ENCODE measurements at regions of chr4 and their contacts with region 1.

Region 1: DNA sequence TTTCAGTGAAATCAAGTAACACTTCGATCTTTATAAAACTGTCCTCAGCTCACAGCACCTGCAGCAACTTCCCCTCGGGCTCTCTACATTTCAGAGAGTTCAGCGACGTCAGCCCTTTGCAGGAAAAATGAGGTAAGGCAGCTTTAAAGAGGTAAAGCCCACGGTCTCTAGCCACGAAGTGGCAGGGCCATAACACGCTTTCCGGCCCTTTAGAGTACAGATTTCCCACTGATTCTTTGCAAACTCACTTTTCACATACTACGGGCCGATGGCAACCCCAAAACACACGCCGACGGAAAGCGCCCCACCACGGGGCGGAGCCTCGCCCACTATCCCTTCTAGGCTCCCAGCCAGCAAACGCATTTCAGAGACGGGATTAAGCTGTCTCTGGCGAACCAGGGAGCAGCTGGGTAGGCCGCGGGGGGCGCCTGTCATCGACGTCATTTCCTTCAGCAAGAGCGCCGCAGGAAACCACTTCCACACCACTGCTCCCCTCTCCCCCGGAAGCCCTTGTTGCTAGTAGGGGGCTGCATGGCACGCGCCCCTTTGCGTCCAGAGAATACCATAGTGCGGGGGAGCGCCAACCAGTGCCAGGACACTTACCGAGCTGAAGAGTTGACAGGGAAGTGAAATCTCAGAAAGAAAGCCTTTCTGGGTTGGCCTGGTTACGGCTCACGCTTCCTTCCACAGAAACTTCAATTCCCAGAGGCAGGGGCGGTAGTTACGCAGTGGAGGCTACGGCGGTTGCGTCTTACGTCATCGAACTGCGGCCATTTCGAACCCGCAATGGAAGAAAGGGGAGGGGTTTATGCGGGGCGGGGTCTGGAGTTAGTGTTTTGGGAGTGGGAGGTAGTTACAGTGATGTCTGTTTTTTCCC is at the start of gene TRMT10A:
- DNase-seq: peak; percentile 97 to 98 (median 98)
- H3K4me3 ChIP-seq: peak within 1 kb of the TSS; percentile 74 to 95
- H3K4me3 Mint-ChIP-seq: peak within 1 kb of the TSS; percentile 95 to 99 (median 98)
- H3K27ac ChIP-seq: peak within 1 kb of the TSS; percentile 93
- H3K27ac Mint-ChIP-seq: peak within 1 kb of the TSS; percentile 99 to 100 (median 100)
- H3K4me1 ChIP-seq: peaks cover 10% of the 10 kb centered on the region
- H3K4me1 Mint-ChIP-seq: peaks cover 13 to 24% (median 19%) of the 10 kb centered on the region in 4 donors
- H3K27me3 ChIP-seq: no peaks in the 10 kb centered on the region
- H3K27me3 Mint-ChIP-seq: peaks cover 7 to 14% of the 10 kb centered on the region in 2 donors
- total RNA-seq, gene TRMT10A: 5.4 to 5.7 TPM

Region 2: DNA sequence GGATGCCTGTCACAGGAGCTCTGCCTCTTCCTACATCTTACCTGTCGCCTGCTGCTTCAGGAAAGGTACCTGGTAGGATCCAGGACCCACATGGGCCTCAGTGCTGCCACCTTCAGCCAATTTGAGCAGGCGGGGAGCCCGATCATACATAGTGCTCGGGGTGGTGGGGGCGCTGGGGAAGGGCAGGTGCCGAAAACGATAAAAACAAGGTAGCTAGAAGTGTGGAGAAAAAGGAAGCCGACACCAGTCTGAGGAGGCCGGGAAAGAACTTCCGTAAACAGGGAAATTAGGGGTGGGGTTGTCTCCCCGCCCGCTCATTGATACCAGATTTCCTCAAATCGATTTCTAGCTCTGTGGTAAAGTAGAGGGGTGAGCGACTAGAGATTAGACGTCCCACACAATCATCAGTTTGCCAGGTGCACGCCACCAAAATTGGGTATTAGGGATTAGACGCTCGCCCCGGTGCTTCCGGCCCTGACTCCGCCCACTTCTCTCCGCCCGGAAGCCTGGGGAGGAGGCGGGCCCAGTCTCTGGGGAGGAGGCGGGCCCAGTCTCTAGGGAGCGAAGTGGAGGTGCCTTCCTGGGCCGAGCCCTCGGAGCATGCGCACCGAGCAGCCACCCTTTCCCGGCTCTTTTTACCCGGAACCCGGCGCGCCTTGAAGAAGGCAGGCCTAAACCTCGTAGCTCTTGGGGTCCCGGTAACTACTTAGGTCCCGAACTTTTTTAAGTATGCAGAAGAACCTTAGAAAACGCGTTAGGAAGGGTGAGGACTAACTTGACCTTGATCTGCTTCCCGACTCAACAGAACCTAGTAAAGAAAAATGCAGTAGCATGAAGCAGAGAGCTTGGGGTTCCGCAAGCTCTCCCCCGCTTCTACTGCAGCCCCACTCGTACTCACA is 1420.3 kb before region 1 on chr4 and contains the start of gene STPG2:
- CTCF ChIA-PET with region 1: no interaction called
- POLR2A ChIA-PET with region 1: interaction called, 5 read pairs
- intact Hi-C with region 1: loop called (anchors 1 kb)
- DNase-seq: peak; percentile 91 to 92 (median 92)
- H3K4me3 ChIP-seq: peak within 1 kb of the TSS; percentile 67 to 69
- H3K4me3 Mint-ChIP-seq: peak within 1 kb of the TSS; percentile 88 to 96 (median 93)
- H3K27ac ChIP-seq: peak within 1 kb of the TSS; percentile 74
- H3K27ac Mint-ChIP-seq: peak within 1 kb of the TSS; percentile 97 to 98 (median 97)
- H3K4me1 ChIP-seq: peaks cover 23% of the 10 kb centered on the region
- H3K4me1 Mint-ChIP-seq: peaks cover 16 to 35% (median 23%) of the 10 kb centered on the region in 4 donors
- H3K27me3 ChIP-seq: no peaks in the 10 kb centered on the region
- H3K27me3 Mint-ChIP-seq: no peaks in the 10 kb centered on the region
- total RNA-seq, gene STPG2: 0.47 to 0.84 TPM

Region 3: DNA sequence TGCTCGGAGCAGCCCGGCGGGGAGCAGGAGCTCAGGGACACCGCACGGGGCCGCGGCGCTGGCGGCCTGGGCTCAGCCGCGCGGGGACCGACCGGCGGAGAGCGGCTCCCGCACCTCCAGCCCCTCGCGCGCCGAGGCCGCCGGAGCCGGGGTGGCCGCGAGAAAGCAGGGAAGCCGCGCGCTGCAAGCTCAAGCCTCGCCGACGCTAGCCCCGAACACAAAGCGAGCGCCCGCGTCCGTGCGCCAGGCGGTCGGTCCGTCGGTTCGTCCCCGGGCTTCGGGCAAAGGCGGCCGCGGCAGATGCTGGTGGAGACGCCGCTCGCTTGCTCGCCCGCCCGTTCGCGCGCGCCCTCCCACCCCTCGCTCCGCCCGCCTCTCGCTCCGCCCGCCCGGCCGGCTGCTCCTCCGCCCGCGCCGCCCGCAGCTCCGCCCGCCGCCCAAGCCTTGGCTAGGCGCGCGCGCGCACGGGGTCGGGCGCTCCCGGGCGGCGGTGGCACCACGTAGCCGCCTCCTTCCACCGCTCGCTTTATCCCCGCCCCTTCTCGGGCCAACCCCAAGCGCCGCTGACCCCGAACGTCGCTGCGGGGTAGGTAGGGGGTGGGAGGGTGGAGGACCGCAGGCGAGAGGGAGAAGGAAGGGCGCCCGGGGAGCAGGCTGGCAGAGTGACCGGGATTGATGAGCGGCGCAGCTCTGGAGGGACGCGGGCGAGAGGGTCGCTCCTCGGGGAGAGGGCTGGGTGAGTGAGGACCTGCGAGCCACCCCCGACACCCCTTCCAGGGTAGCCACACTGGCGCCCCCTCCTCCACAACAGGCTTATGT is 905.1 kb before region 1 on chr4 and contains the start of gene TSPAN5:
- CTCF ChIA-PET with region 1: no interaction called
- POLR2A ChIA-PET with region 1: no interaction called
- intact Hi-C with region 1: loop called (anchors 5 kb)
- DNase-seq: peak; percentile 77 to 83 (median 80)
- H3K4me3 ChIP-seq: peak within 1 kb of the TSS; percentile 95 to 99
- H3K4me3 Mint-ChIP-seq: peak within 1 kb of the TSS; percentile 91 to 100 (median 96)
- H3K27ac ChIP-seq: peak within 1 kb of the TSS; percentile 60
- H3K27ac Mint-ChIP-seq: peak within 1 kb of the TSS; percentile 59 to 96 (median 92)
- H3K4me1 ChIP-seq: peaks cover 82% of the 10 kb centered on the region
- H3K4me1 Mint-ChIP-seq: peaks cover 55 to 91% (median 74%) of the 10 kb centered on the region in 4 donors
- H3K27me3 ChIP-seq: no peaks in the 10 kb centered on the region
- H3K27me3 Mint-ChIP-seq: no peaks in the 10 kb centered on the region
- total RNA-seq, gene TSPAN5: 16.8 to 17.4 TPM

Region 4: GRCh38 chr4:99088481-99089365 is 474.8 kb before region 1 on chr4 and contains the start of gene ADH5:
- CTCF ChIA-PET with region 1: no interaction called
- POLR2A ChIA-PET with region 1: interaction called, 12 read pairs
- intact Hi-C with region 1: loop called (anchors 1 kb)
- DNase-seq: peak; percentile 83 to 90 (median 86)
- H3K4me3 ChIP-seq: peak within 1 kb of the TSS; percentile 73 to 99
- H3K4me3 Mint-ChIP-seq: peak within 1 kb of the TSS; percentile 92 to 99 (median 98)
- H3K27ac ChIP-seq: peak within 1 kb of the TSS; percentile 77
- H3K27ac Mint-ChIP-seq: peak within 1 kb of the TSS; percentile 89 to 99 (median 98)
- H3K4me1 ChIP-seq: peaks cover 39% of the 10 kb centered on the region
- H3K4me1 Mint-ChIP-seq: peaks cover 35 to 71% (median 54%) of the 10 kb centered on the region in 4 donors
- H3K27me3 ChIP-seq: no peaks in the 10 kb centered on the region
- H3K27me3 Mint-ChIP-seq: no peaks in the 10 kb centered on the region
- total RNA-seq, gene ADH5: 75.6 to 80.5 TPM

Region 5: GRCh38 chr4:99808260-99808857 is 244.8 kb after region 1 on chr4:
- CTCF ChIA-PET with region 1: interaction called, 37 read pairs
- POLR2A ChIA-PET with region 1: interaction called, 9 read pairs
- intact Hi-C with region 1: loop called (anchors 1 kb)
- DNase-seq: peak; percentile 69 to 76 (median 70)
- H3K4me3 ChIP-seq: no peak overlapping the region
- H3K4me3 Mint-ChIP-seq: peak overlapping the region in 1 of 8 donors; percentile 62
- H3K27ac ChIP-seq: no peak overlapping the region
- H3K27ac Mint-ChIP-seq: no peak overlapping the region
- H3K4me1 ChIP-seq: no peaks in the 10 kb centered on the region
- H3K4me1 Mint-ChIP-seq: peaks cover 5 to 6% (median 5%) of the 10 kb centered on the region in 4 donors
- H3K27me3 ChIP-seq: no peaks in the 10 kb centered on the region
- H3K27me3 Mint-ChIP-seq: peaks cover 4 to 5% of the 10 kb centered on the region in 2 donors

Region 6: DNA sequence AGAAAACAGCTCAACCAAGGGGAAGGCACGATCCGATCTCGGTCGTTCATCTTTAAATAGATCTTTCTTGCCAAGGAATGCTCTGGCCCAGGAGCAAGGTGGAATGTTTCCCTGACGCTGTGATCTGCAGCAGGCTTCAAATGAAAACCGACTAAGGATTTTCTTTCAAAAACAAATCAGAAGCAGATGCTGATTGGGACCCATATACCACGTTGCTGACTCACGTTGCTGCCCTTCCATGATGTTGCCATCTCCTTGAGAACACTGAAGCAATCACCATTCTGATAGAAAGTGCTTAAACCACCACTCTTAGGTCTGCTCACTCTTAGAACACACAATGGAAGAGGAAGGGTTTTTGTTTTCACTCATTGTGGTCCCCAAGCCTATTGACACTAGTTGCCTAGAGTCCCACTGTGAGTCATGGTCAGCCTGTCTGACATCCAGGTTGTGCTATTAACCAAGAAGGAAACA is 304.6 kb after region 1 on chr4:
- CTCF ChIA-PET with region 1: no interaction called
- POLR2A ChIA-PET with region 1: no interaction called
- intact Hi-C with region 1: no loop called
- DNase-seq: no peak
- H3K4me3 ChIP-seq: no peak overlapping the region
- H3K4me3 Mint-ChIP-seq: no peak overlapping the region
- H3K27ac ChIP-seq: no peak overlapping the region
- H3K27ac Mint-ChIP-seq: peak overlapping the region in 1 of 7 donors; percentile 19
- H3K4me1 ChIP-seq: no peaks in the 10 kb centered on the region
- H3K4me1 Mint-ChIP-seq: peaks cover 0 to 3% (median 0%) of the 10 kb centered on the region in 4 donors
- H3K27me3 ChIP-seq: no peaks in the 10 kb centered on the region
- H3K27me3 Mint-ChIP-seq: no peaks in the 10 kb centered on the region

Region 7: GRCh38 chr4:99885063-99885664 is 321.6 kb after region 1 on chr4:
- CTCF ChIA-PET with region 1: interaction called, 10 read pairs
- POLR2A ChIA-PET with region 1: interaction called, 4 read pairs
- intact Hi-C with region 1: loop called (anchors 1 kb)
- DNase-seq: peak; percentile 47 to 61 (median 53)
- H3K4me3 ChIP-seq: no peak overlapping the region
- H3K4me3 Mint-ChIP-seq: no peak overlapping the region
- H3K27ac ChIP-seq: no peak overlapping the region
- H3K27ac Mint-ChIP-seq: no peak overlapping the region
- H3K4me1 ChIP-seq: no peaks in the 10 kb centered on the region
- H3K4me1 Mint-ChIP-seq: peaks cover 6 to 11% (median 6%) of the 10 kb centered on the region in 4 donors
- H3K27me3 ChIP-seq: no peaks in the 10 kb centered on the region
- H3K27me3 Mint-ChIP-seq: no peaks in the 10 kb centered on the region

Region 8: DNA sequence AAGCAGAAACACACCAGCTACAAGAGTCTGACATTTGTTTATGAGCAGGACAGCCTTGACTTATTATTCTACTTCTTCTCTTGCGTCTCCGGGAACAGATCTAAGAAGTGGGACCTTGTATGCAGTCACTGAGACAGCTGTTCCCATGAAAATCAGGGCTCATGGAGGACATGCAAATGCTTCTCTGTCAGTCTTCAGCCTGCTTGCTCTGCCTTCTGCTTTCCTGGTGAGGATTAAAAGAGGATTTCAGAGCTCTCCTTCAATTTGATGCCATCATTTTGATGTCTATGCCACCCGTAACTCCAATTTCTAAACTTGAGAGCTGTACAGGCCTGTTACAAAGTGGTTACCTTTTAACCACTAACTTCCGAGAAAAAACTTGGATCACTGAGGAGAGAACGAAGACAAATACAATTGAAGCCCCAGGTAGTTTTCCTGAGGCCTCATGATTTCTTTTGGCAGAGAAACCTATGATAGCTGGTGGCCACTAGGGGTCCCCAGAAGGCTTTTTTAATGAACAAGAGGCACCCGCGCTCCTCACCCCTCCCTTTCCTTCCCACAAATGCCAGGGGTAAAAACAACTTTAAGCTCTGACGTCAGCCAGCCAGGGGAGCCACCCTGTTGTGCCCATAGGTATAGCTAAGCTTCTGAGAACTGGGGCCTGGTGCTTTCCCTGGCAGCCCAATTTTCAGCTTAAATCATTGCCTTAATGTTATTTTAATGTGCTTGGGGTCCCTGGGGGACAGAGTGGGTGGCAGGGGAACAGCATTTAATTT is 529.7 kb after region 1 on chr4:
- CTCF ChIA-PET with region 1: interaction called, 4 read pairs
- POLR2A ChIA-PET with region 1: interaction called, 6 read pairs
- intact Hi-C with region 1: loop called (anchors 1 kb)
- DNase-seq: peak; percentile 87 to 97 (median 91)
- H3K4me3 ChIP-seq: no peak overlapping the region
- H3K4me3 Mint-ChIP-seq: peak overlapping the region in 4 of 8 donors; percentile 12 to 61 (median 36)
- H3K27ac ChIP-seq: no peak overlapping the region
- H3K27ac Mint-ChIP-seq: peak overlapping the region; percentile 78 to 96 (median 96)
- H3K4me1 ChIP-seq: peaks cover 13% of the 10 kb centered on the region
- H3K4me1 Mint-ChIP-seq: peaks cover 9 to 28% (median 15%) of the 10 kb centered on the region in 4 donors
- H3K27me3 ChIP-seq: no peaks in the 10 kb centered on the region
- H3K27me3 Mint-ChIP-seq: no peaks in the 10 kb centered on the region